IMR-90 (cell line): ENCODE measurements at regions of chr1 and their contacts with region 1.

Region 1: DNA sequence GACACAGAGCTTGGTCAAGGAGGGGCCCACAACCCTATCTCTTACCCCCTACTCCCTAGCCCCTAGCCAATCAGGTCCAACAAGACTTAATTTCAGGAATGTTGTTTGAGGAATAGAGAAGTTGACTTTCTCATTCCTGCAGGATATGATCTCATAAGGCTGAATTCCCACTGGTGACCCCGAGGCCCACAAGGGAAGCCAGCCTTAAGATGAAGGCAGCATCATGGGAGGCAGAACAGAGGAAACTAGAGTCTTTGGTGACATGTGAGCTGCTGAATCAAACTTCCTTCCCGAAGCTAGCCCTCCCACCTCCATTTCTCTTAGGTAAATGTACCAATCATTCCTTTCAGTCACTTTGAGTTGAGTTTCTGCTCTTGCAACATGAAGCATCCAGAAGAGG is 9.1 kb upstream of the PDIK1L start:
- DNase-seq: peak; percentile 47
- ATAC-seq: 0 out of 2 replicates have a peak, but pooled peaks have one; percentile 15
- H3K4me3 ChIP-seq: no peak overlapping the region
- H3K27ac ChIP-seq: no peak overlapping the region
- H3K4me1 ChIP-seq: peaks cover 2% of the 10 kb centered on the region; the same call in 1 of the 2 replicates
- H3K27me3 ChIP-seq: no peaks in the 10 kb centered on the region; the same call in 1 of the 2 replicates
- CTCF ChIP-seq: no peak
- POLR2A ChIP-seq: no peak
- RAD21 ChIP-seq: no peak

Region 2: DNA sequence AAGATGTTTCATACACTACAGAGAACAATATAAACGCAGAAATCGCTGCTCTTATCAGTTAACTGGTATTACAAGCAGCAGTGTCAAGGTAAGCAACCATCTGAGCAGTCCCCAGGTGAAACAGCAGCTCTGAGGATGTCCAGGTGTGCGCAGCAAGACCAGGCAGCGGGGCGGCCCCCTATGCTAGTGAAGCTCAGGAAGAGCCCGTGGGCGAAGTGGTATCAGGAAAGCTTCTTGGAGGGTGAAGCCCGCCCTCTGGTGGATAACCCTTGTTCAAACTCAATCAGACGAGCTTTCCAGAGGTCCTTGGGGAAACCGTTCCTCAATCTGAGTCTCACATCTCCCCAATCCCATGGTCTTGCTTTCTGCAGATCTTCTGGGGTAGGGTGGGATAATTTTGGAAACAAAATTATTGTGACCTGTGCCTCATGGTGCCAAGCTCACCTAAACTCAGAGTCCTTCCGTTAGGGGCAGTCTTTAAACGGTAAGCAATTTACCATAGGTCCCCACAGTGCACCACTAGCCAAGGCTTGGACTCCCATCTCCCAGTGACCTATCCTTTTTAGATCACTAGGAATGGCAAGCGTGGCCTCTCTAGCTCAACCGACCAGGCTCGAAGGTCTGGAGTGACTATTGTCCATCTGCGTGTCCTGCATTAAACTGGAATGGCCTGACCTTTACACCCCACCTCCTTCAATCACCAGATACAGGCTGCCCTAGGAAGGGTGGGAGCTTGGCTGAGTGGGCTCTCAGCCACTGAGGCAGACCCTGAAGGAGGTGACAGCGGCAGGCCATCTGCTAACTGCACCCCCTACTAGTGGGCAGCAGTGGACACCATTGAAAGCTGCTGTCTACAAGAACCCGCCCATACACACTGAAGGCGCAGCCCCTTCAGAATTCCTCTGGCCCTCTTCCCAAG is 42.8 kb after region 1 on chr1:
- CTCF ChIA-PET with region 1: interaction called, 8 read pairs
- POLR2A ChIA-PET with region 1: no interaction called
- dilution Hi-C with region 1: no loop called
- in situ Hi-C with region 1: loop called (anchors 5 kb)
- intact Hi-C with region 1: loop called (anchors 1 kb)
- DNase-seq: peak; percentile 80
- ATAC-seq: peak; percentile 97
- H3K4me3 ChIP-seq: no peak overlapping the region
- H3K27ac ChIP-seq: no peak overlapping the region
- H3K4me1 ChIP-seq: no peaks in the 10 kb centered on the region
- H3K27me3 ChIP-seq: peaks cover 27% of the 10 kb centered on the region
- CTCF ChIP-seq: peak; percentile 72
- POLR2A ChIP-seq: no peak
- RAD21 ChIP-seq: peak; percentile 77

Region 3: DNA sequence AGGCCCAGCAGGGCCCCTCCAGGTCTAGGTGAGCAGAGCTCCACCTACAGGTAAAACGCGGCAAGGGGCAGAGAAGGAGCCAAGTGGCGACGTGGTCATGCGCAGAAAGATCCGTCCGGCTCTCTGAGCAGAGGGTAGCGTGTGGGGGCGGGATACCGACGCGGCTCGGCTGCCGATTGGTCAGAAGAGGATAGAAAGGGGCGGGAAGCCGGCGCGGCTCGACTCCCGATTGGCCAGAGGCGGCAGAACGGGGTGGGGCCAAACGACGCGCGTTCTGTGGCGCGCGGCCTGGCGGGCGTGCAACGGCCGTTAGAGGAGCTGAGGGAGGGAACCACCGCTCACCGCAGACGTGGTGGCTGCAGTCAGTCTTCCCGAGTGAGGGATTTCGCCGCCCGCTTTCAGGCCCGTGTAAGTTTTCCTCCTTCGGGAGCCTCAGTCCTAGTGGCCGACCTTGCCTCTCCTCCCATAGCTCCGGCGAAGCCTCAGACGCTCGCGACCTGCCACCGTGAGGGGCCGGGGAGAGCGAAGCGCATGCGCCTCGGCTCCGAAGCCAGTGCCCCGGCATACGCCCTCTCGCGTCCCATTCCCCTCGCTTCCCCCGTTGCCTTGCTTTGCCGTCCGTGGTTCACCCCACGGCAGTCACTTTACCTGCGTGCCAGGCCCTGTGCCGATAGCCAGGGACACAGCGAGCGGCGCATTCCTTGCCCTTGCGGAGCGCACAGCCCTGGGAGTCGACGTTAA is 131.5 kb after region 1 on chr1 and contains the start of gene CEP85:
- CTCF ChIA-PET with region 1: no interaction called
- POLR2A ChIA-PET with region 1: interaction called, 5 read pairs
- dilution Hi-C with region 1: no loop called
- in situ Hi-C with region 1: no loop called
- intact Hi-C with region 1: loop called (anchors 10 kb)
- DNase-seq: peak; percentile 96
- ATAC-seq: peak; percentile 98
- H3K4me3 ChIP-seq: peak within 1 kb of the TSS; percentile 86
- H3K27ac ChIP-seq: peak within 1 kb of the TSS; percentile 65
- H3K4me1 ChIP-seq: peaks cover 4% of the 10 kb centered on the region
- H3K27me3 ChIP-seq: no peaks in the 10 kb centered on the region
- CTCF ChIP-seq: peak; percentile 84
- POLR2A ChIP-seq: peak; percentile 35; the same call in 1 of the 2 replicates
- RAD21 ChIP-seq: peak; percentile 57
- total RNA-seq, gene CEP85: 11.1 and 11.5 TPM in 2 replicates

Region 4: DNA sequence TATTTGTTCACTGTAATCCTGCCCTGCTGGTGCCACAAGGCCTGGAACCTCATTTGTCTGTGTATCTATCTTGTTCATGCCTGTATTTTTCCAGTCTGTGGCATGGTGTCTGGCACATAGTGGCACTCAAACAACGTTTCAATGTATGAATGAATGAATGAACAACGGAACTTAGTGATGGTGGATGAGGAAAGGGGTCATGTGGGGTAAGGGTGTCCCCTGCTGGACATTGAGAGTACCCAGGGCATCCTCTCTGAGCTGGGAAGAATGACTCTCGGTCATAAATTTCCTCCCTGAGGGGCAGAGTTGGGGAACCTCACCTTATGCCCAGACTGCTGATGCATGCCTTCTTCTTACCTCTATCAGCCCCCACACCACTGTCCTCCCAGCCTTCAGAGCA is 288.9 kb after region 1 on chr1:
- CTCF ChIA-PET with region 1: no interaction called
- POLR2A ChIA-PET with region 1: no interaction called
- dilution Hi-C with region 1: no loop called
- in situ Hi-C with region 1: no loop called
- intact Hi-C with region 1: loop called (anchors 2 kb)
- DNase-seq: peak; percentile 59
- ATAC-seq: peak; percentile 94
- H3K4me3 ChIP-seq: no peak overlapping the region
- H3K27ac ChIP-seq: no peak overlapping the region
- H3K4me1 ChIP-seq: no peaks in the 10 kb centered on the region
- H3K27me3 ChIP-seq: peaks cover 2% of the 10 kb centered on the region; the same call in 1 of the 2 replicates
- CTCF ChIP-seq: peak; percentile 90
- POLR2A ChIP-seq: no peak
- RAD21 ChIP-seq: peak; percentile 94